B cell (primary cell): ENCODE measurements at regions of chr9 and their contacts with region 1.

Region 1: DNA sequence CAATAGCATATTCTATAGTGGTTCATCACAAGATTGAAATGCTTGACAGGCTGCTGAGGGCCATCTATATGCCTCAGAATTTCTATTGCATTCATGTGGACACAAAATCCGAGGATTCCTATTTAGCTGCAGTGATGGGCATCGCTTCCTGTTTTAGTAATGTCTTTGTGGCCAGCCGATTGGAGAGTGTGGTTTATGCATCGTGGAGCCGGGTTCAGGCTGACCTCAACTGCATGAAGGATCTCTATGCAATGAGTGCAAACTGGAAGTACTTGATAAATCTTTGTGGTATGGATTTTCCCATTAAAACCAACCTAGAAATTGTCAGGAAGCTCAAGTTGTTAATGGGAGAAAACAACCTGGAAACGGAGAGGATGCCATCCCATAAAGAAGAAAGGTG is 43.8 kb downstream of the GCNT1 start:
- DNase-seq: no peak
- ATAC-seq: no peak
- H3K4me3 ChIP-seq: no peak overlapping the region
- H3K4me3 Mint-ChIP-seq: no peak overlapping the region
- H3K27ac ChIP-seq: no peak overlapping the region
- H3K27ac Mint-ChIP-seq: no peak overlapping the region
- H3K4me1 ChIP-seq: no peaks in the 10 kb centered on the region
- H3K4me1 Mint-ChIP-seq: peaks cover 9% of the 10 kb centered on the region
- H3K27me3 ChIP-seq: no peaks in the 10 kb centered on the region
- H3K27me3 Mint-ChIP-seq: no peaks in the 10 kb centered on the region
- CTCF ChIP-seq: no peak

Region 2: DNA sequence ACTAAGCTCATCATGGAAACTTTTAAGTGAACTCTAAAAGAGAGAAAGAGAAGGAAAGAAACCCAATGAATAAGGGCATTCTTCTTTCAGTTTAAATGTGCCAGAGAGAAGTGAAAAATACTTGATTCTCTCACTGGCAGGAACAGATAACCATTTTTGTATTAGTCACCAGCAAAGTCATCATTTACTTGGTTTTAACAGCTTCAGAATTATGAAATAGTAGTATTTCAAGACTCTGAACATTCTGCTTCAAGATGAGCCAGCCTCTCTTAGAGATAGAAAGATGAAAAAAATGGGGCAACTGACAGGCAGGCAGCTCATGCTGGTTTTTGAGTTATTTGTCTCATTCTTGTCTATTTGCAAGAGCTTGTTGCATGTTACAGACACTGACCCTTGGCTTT is 59.8 kb after region 1 on chr9:
- CTCF ChIA-PET with region 1: no interaction called
- POLR2A ChIA-PET with region 1: no interaction called
- intact Hi-C with region 1: loop called (anchors 5 kb)
- DNase-seq: peak; percentile 24
- ATAC-seq: peak; percentile 31
- H3K4me3 ChIP-seq: peak overlapping the region in 1 of 5 experiments; percentile 31
- H3K4me3 Mint-ChIP-seq: peak overlapping the region; percentile 65
- H3K27ac ChIP-seq: peak overlapping the region; percentile 39 to 68
- H3K27ac Mint-ChIP-seq: peak overlapping the region; percentile 62
- H3K4me1 ChIP-seq: peaks cover 58 to 61% of the 10 kb centered on the region in 2 donors
- H3K4me1 Mint-ChIP-seq: peaks cover 65% of the 10 kb centered on the region
- H3K27me3 ChIP-seq: no peaks in the 10 kb centered on the region
- H3K27me3 Mint-ChIP-seq: no peaks in the 10 kb centered on the region
- CTCF ChIP-seq: no peak

Region 3: DNA sequence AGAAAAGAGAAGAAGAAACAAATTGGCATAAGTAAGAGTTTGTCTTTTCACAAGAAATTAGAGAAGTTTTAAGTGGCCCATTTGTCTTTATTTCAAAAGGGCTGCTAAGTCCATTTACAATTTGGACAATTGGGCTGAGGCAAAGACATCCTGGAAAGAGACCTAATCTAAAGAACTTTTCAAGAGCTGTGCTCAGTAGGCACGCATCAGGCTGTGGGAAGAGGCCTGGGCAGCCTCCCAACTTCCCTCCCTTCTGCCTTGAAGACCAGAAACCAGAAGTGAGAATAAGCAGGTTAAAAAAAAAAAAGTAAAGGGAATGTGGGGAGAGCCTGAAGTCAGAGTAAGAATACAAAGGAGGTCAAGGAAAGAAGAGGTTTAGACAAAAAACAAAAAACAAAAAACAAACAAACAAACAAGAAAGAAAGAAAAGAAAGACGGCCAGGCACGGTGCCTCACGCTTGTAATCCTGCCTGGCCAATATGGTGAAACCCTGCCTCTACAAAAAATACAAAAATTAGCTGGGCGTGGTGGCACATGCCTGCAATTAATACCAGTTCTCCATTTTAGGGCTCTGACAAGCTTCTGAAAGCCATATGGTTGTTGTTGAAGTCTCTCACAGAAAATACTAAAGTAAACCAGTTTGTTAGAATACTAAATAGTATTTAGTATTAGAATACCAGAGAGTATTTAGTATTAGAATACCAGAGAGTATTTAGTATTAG is 1685.2 kb after region 1 on chr9:
- CTCF ChIA-PET with region 1: no interaction called
- POLR2A ChIA-PET with region 1: no interaction called
- intact Hi-C with region 1: no loop called
- DNase-seq: no peak
- ATAC-seq: no peak
- H3K4me3 ChIP-seq: no peak overlapping the region
- H3K4me3 Mint-ChIP-seq: no peak overlapping the region
- H3K27ac ChIP-seq: no peak overlapping the region
- H3K27ac Mint-ChIP-seq: no peak overlapping the region
- H3K4me1 ChIP-seq: peaks cover 14 to 15% of the 10 kb centered on the region in 2 donors
- H3K4me1 Mint-ChIP-seq: peaks cover 17% of the 10 kb centered on the region
- H3K27me3 ChIP-seq: no peaks in the 10 kb centered on the region
- H3K27me3 Mint-ChIP-seq: peaks cover 2% of the 10 kb centered on the region
- CTCF ChIP-seq: no peak